CD4-positive, alpha-beta T cell (primary cell): ENCODE measurements at regions of chr5 and their contacts with region 1.

Region 1: GRCh38 chr5:1641560-1642166 is 117.9 kb upstream of the LPCAT1 start:
- DNase-seq: peak; percentile 46 to 90 (median 72)
- ATAC-seq: peak; percentile 86
- H3K4me3 ChIP-seq: no peak overlapping the region
- H3K4me3 Mint-ChIP-seq: peak overlapping the region; percentile 36
- H3K27ac ChIP-seq: no peak overlapping the region
- H3K27ac Mint-ChIP-seq: no peak overlapping the region
- H3K4me1 ChIP-seq: peaks cover 17% of the 10 kb centered on the region
- H3K4me1 Mint-ChIP-seq: peaks cover 16% of the 10 kb centered on the region
- H3K27me3 ChIP-seq: peaks cover 27% of the 10 kb centered on the region in 2 experiments
- H3K27me3 Mint-ChIP-seq: peaks cover 40% of the 10 kb centered on the region
- CTCF ChIP-seq: peak; percentile 98

Region 2: GRCh38 chr5:923281-923873 is 718.3 kb before region 1 on chr5:
- CTCF ChIA-PET with region 1: no interaction called
- POLR2A ChIA-PET with region 1: no interaction called
- intact Hi-C with region 1: loop called in 1 of 2 experiments (anchors 10 kb)
- DNase-seq: peak; percentile 52 to 82 (median 63)
- ATAC-seq: peak; percentile 69
- H3K4me3 ChIP-seq: no peak overlapping the region
- H3K4me3 Mint-ChIP-seq: no peak overlapping the region
- H3K27ac ChIP-seq: no peak overlapping the region
- H3K27ac Mint-ChIP-seq: no peak overlapping the region
- H3K4me1 ChIP-seq: peaks cover 13% of the 10 kb centered on the region
- H3K4me1 Mint-ChIP-seq: peaks cover 5% of the 10 kb centered on the region
- H3K27me3 ChIP-seq: peaks cover 12 to 26% of the 10 kb centered on the region in 2 experiments
- H3K27me3 Mint-ChIP-seq: peaks cover 40% of the 10 kb centered on the region
- CTCF ChIP-seq: peak; percentile 88

Region 3: DNA sequence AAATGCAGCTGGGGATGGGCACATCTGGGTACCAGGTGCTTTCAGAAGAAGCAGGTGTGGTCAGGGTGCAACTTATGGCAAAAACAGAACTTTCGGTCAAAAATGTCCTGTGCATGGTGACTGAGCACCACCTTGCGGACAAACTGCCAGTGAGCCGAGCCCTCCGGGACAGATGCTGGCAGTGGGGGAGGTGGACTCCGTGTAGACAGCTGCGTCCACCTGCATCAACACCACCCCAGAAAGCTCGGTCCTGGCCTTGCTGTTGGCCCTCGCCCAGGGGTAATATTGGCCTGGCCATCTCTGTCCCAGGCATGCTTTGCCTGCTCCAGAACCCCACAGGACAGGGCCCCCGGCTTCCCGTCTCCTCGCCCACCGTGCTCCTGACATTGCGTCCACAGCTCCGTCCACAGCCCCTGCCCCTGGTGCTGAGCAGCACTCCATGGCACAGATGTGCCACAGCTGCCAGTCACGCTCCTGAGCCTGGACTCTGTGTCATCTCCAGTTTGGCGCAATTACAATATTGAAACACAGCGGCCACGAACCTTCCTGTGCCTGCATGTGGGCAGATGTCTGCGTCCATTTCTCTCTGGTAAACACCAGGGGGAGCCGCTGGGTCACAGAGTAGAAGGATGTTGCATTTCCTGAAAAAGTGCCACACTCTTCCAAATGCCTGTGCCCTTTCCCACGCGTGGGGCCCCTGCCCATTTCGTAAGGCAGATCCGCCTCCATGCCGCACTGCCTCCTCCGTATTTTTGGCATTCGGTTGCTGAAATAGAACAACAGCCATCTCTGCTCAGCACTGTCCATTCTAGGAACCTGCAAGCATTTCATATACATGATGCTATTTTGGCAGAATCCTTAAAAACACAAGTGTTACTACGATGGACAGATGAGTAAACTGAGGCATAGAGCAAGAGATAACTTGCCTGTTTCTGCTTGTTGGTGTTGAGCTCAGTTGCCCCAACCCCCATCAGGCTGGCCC is 473.6 kb before region 1 on chr5:
- CTCF ChIA-PET with region 1: interaction called, 13 read pairs
- POLR2A ChIA-PET with region 1: no interaction called
- intact Hi-C with region 1: loop called (anchors 1 kb)
- DNase-seq: peak; percentile 52 to 85 (median 62)
- ATAC-seq: peak; percentile 88
- H3K4me3 ChIP-seq: peak overlapping the region; percentile 3
- H3K4me3 Mint-ChIP-seq: peak overlapping the region; percentile 62
- H3K27ac ChIP-seq: no peak overlapping the region
- H3K27ac Mint-ChIP-seq: no peak overlapping the region
- H3K4me1 ChIP-seq: peaks cover 13% of the 10 kb centered on the region
- H3K4me1 Mint-ChIP-seq: peaks cover 7% of the 10 kb centered on the region
- H3K27me3 ChIP-seq: peaks cover 0 to 10% of the 10 kb centered on the region in 2 experiments
- H3K27me3 Mint-ChIP-seq: peaks cover 4% of the 10 kb centered on the region
- CTCF ChIP-seq: peak; percentile 86

Region 4: DNA sequence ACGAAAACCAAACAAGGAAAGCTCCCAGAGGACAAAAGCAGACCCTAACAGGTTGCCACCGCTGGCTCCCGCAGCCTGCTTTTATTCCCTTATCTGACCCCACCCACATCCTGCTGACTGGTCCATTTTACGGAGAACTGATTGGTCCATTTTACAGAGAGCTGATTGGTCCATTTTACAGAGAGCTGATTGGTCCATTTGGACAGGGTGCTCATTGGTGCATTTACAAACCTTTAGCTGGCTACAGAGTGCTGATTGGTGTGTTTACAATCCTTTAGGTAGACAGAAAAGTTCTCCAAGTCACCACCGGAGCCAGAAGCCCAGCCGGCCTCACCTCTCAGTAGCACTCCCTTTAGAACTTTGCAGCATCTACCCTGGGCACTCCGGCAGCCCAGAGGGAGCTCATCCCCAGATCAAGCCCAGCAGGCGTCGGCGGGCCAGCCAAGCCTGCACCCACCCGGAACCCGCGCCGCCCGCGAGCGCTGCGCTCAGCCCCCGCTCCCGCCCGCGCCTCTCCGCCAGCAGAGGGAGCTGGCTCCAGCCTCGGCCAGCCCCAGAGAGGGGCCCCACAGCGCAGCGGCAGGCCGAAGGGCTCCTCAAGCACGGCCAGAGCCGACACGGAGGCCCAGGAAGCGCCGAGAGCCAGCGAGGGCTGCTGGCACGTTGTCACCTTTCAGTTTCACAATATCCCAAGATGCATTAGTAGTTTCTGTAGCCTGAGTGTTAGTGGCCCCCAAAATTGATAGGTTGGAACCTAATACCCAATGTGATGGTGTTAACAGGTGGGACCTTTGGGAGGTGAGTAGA is 261.4 kb before region 1 on chr5:
- CTCF ChIA-PET with region 1: interaction called, 4 read pairs
- POLR2A ChIA-PET with region 1: interaction called, 8 read pairs
- intact Hi-C with region 1: loop called (anchors 1 to 2 kb)
- DNase-seq: peak; percentile 19 to 76 (median 48)
- ATAC-seq: peak; percentile 89
- H3K4me3 ChIP-seq: peak overlapping the region; percentile 24
- H3K4me3 Mint-ChIP-seq: peak overlapping the region; percentile 75
- H3K27ac ChIP-seq: no peak overlapping the region
- H3K27ac Mint-ChIP-seq: peak overlapping the region; percentile 54
- H3K4me1 ChIP-seq: peaks cover 18% of the 10 kb centered on the region
- H3K4me1 Mint-ChIP-seq: peaks cover 9% of the 10 kb centered on the region
- H3K27me3 ChIP-seq: no peaks in the 10 kb centered on the region
- H3K27me3 Mint-ChIP-seq: no peaks in the 10 kb centered on the region
- CTCF ChIP-seq: peak; percentile 84

Region 5: GRCh38 chr5:1479581-1480188 is 162.0 kb before region 1 on chr5:
- CTCF ChIA-PET with region 1: interaction called, 5 read pairs
- POLR2A ChIA-PET with region 1: no interaction called
- intact Hi-C with region 1: loop called (anchors 1 kb)
- DNase-seq: peak in 12 of 14 experiments; percentile 14 to 77 (median 34)
- ATAC-seq: peak; percentile 64
- H3K4me3 ChIP-seq: no peak overlapping the region
- H3K4me3 Mint-ChIP-seq: no peak overlapping the region
- H3K27ac ChIP-seq: peak overlapping the region in 1 of 2 donors; percentile 40
- H3K27ac Mint-ChIP-seq: no peak overlapping the region
- H3K4me1 ChIP-seq: peaks cover 6% of the 10 kb centered on the region
- H3K4me1 Mint-ChIP-seq: no peaks in the 10 kb centered on the region
- H3K27me3 ChIP-seq: no peaks in the 10 kb centered on the region
- H3K27me3 Mint-ChIP-seq: no peaks in the 10 kb centered on the region
- CTCF ChIP-seq: peak; percentile 74

Region 6: DNA sequence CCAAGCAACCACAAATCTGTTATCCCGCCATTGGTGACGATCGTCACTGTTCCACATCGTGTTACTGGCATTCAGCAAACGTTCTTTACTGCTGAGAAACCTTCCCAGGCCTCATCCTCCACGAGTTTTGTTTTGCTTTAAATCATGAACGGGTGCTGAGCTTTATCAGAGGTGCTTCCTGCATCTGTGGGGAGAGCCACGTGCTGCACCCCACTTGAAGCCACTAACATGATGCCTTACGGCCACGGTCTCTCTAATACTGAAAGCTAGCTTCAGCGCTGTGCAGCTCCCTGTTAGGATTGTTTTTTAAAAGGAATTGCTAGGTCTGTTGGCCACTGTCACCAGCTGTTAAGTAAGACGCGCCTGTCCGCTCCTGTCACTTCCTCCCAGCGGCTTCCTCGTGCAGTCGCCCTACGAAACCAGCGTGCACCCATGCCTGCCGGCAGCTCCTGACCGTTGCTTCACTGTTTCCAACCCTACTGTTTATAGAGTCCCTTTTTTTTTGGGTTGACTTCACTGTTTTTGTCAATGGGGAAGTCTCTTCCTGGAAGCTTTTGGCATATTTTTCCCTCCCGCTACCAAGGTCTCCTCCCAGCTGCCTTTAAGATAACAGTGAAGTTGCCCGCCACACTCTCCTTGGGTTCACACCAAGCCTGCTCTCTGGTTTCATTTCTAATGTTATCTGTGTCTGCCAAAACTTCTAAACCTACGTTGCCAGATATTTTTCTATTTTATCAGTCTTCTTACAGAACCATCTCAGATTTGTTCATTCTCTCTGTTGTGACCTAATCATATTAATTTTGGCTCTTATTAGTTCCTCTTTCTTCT is 138.2 kb before region 1 on chr5:
- CTCF ChIA-PET with region 1: no interaction called
- POLR2A ChIA-PET with region 1: no interaction called
- intact Hi-C with region 1: no loop called
- DNase-seq: peak in 4 of 14 experiments; percentile 28 to 63 (median 51)
- ATAC-seq: peak; percentile 24
- H3K4me3 ChIP-seq: no peak overlapping the region
- H3K4me3 Mint-ChIP-seq: peak overlapping the region; percentile 28
- H3K27ac ChIP-seq: no peak overlapping the region
- H3K27ac Mint-ChIP-seq: peak overlapping the region; percentile 18
- H3K4me1 ChIP-seq: peaks cover 42% of the 10 kb centered on the region
- H3K4me1 Mint-ChIP-seq: peaks cover 24% of the 10 kb centered on the region
- H3K27me3 ChIP-seq: no peaks in the 10 kb centered on the region
- H3K27me3 Mint-ChIP-seq: no peaks in the 10 kb centered on the region
- CTCF ChIP-seq: no peak

Region 7: GRCh38 chr5:1685066-1685465 is 43.4 kb after region 1 on chr5:
- CTCF ChIA-PET with region 1: no interaction called
- POLR2A ChIA-PET with region 1: no interaction called
- intact Hi-C with region 1: no loop called
- DNase-seq: no peak
- ATAC-seq: no peak
- H3K4me3 ChIP-seq: no peak overlapping the region
- H3K4me3 Mint-ChIP-seq: no peak overlapping the region
- H3K27ac ChIP-seq: no peak overlapping the region
- H3K27ac Mint-ChIP-seq: no peak overlapping the region
- H3K4me1 ChIP-seq: no peaks in the 10 kb centered on the region
- H3K4me1 Mint-ChIP-seq: no peaks in the 10 kb centered on the region
- H3K27me3 ChIP-seq: peaks cover 5 to 7% of the 10 kb centered on the region in 2 experiments
- H3K27me3 Mint-ChIP-seq: peaks cover 35% of the 10 kb centered on the region
- CTCF ChIP-seq: no peak